BJ (cell line): ENCODE measurements at regions of chr11 and their contacts with region 1.

Region 1: GRCh38 chr11:7904914-7905313 is 26.2 kb downstream of the OR10A6 start:
- DNase-seq: no peak
- H3K4me3 ChIP-seq: no peak overlapping the region
- H3K27me3 ChIP-seq: no peaks in the 10 kb centered on the region
- CTCF ChIP-seq: peak; percentile 52

Region 2: DNA sequence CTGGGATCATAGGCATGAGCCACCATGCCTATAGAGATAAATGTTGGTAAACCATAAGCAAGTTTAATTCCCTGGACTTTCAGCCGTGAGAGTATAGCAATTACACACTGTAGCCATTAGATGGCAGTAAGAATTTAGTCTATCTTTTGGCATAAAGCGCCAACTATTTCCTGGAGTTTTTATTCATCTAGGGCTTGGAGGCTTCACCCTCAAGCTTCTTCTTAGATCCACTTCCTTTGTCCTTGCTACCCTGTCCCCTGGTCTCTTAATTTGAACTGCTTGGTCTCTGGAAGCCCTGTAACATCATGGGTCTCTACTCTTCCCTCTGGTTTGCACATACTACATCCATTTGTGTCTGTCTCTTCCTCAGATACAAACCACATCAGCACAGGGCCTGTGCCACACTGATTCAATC is 12.1 kb before region 1 on chr11:
- CTCF ChIA-PET with region 1: interaction called, 80 read pairs
- POLR2A ChIA-PET with region 1: interaction called, 3 read pairs
- DNase-seq: no peak
- H3K4me3 ChIP-seq: no peak overlapping the region
- H3K27me3 ChIP-seq: no peaks in the 10 kb centered on the region
- CTCF ChIP-seq: peak; percentile 65

Region 3: DNA sequence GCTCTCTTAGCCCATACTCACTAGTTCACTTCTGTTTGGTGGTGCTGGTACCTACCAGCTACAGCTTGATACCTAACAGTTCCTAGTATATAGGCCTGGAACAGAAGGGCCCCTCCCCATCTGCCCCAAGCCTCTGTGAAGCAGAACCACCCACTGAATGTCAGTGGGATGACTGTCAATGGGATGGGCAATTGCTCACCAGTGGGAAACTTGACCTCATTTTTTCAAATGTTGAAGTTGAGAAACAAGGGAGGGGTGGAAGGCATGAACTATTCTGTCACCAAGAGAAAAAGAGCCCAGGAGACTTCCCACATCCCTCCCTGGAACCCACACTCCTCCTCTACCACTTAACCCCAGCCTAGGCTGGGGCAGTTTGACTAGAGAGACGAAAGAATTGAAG is 60.5 kb after region 1 on chr11 and contains the start of gene NLRP10:
- CTCF ChIA-PET with region 1: interaction called, 10 read pairs
- POLR2A ChIA-PET with region 1: interaction called, 4 read pairs
- DNase-seq: peak; percentile 86
- H3K4me3 ChIP-seq: no peak within 1 kb of the TSS
- H3K27me3 ChIP-seq: no peaks in the 10 kb centered on the region
- CTCF ChIP-seq: no peak
- polyA plus RNA-seq, gene NLRP10: 3.9 and 5.1 TPM in 2 replicates

Region 4: GRCh38 chr11:7977232-7977917 is 72.5 kb after region 1 on chr11:
- CTCF ChIA-PET with region 1: interaction called, 196 read pairs
- POLR2A ChIA-PET with region 1: interaction called, 3 read pairs
- DNase-seq: peak; percentile 94
- H3K4me3 ChIP-seq: no peak overlapping the region
- H3K27me3 ChIP-seq: no peaks in the 10 kb centered on the region
- CTCF ChIP-seq: no peak

Region 5: DNA sequence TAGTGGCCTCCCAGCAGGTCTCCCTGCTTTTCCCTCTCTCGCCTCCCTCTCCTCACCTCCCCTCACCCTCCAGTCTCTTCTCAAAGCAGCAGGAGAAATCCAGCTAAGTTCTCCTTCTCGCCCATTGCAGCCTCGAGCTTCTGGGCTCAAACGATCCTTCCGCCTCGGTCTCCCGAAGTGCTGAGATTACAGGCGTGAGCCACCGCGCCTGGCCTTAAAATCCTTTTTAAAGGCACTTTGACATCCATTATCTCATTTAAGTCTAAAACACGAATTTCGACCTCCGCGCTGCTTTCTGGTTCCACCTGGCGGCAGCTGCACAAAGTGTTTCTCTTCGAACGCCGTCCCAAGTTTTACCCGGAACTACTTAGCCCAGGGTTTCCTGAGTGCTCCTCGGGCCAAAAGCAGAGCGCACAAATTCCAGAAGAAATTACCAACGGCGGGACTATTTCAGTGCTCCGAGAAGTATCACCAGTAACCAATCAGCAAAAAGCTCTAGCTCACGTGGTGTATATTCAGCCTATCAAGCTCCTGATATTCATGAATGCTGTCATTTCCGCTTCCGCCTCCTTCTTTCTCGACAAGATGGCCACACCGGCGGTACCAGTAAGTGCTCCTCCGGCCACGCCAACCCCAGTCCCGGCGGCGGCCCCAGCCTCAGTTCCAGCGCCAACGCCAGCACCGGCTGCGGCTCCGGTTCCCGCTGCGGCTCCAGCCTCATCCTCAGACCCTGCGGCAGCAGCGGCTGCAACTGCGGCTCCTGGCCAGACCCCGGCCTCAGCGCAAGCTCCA is 82.0 kb after region 1 on chr11 and contains the start of gene EIF3F:
- CTCF ChIA-PET with region 1: interaction called, 196 read pairs
- POLR2A ChIA-PET with region 1: interaction called, 10 read pairs
- DNase-seq: peak; percentile 99
- H3K4me3 ChIP-seq: peak within 1 kb of the TSS; percentile 78
- H3K27me3 ChIP-seq: no peaks in the 10 kb centered on the region
- CTCF ChIP-seq: peak; percentile 80
- polyA plus RNA-seq, gene EIF3F: 181 and 218 TPM in 2 replicates

Region 6: GRCh38 chr11:7994581-7995278 is 89.8 kb after region 1 on chr11:
- CTCF ChIA-PET with region 1: interaction called, 26 read pairs
- POLR2A ChIA-PET with region 1: no interaction called
- DNase-seq: no peak
- H3K4me3 ChIP-seq: no peak overlapping the region
- H3K27me3 ChIP-seq: no peaks in the 10 kb centered on the region
- CTCF ChIP-seq: no peak

Region 7: DNA sequence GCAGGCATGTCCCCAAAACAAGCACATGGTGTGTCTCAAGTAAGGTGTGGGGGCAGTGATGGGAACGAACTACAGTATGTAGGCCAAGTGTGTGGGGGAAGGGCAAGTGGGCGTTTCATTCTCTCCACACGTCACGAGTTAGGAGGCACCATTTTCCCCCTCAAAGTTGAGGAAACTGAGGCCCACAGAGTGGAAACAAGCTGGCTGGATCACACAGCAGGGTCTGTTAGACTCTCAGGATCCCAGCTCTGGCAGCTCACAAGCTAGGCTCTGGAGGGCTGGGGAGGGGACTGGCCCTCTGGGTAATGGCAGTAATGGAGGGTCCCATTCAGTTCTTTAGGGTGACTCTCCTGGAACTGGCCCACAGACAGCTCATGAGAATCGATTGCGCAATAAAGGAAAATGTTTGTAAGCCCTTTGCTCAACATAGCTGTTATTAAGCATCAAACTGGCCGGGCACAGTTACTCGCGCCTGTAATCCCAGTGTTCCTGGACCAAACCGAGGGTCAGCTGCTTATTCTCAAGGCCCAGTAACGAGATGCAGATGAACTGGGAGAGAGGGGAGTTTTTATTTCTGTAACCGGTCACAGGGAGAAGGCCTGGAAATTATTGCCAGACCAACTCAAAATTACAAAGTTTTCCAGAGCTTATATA is 152.0 kb after region 1 on chr11:
- CTCF ChIA-PET with region 1: no interaction called
- POLR2A ChIA-PET with region 1: no interaction called
- DNase-seq: peak; percentile 35
- H3K4me3 ChIP-seq: no peak overlapping the region
- H3K27me3 ChIP-seq: no peaks in the 10 kb centered on the region
- CTCF ChIP-seq: no peak

Region 8: GRCh38 chr11:8092587-8093424 is 187.9 kb after region 1 on chr11:
- CTCF ChIA-PET with region 1: interaction called, 11 read pairs
- POLR2A ChIA-PET with region 1: no interaction called
- DNase-seq: no peak
- H3K4me3 ChIP-seq: no peak overlapping the region
- H3K27me3 ChIP-seq: no peaks in the 10 kb centered on the region
- CTCF ChIP-seq: peak; percentile 87